Naive thymus-derived CD4-positive, alpha-beta T cell (primary cell): ENCODE measurements at regions of chr17 and their contacts with region 1.

Region 1: GRCh38 chr17:77372444-77373298 is 231.9 kb downstream of the SEC14L1 start:
- DNase-seq: peak; percentile 44 to 82 (median 63)
- ATAC-seq: peak; percentile 60
- H3K4me3 ChIP-seq: peak overlapping the region; percentile 98
- H3K4me3 Mint-ChIP-seq: peak overlapping the region; percentile 80 to 100 (median 85)
- H3K27ac ChIP-seq: peak overlapping the region; percentile 80
- H3K27ac Mint-ChIP-seq: peak overlapping the region in 8 of 9 donors; percentile 84 to 93 (median 90)
- H3K4me1 ChIP-seq: peaks cover 44 to 54% of the 10 kb centered on the region in 2 donors
- H3K4me1 Mint-ChIP-seq: peaks cover 49 to 74% (median 65%) of the 10 kb centered on the region in 7 donors
- H3K27me3 ChIP-seq: no peaks in the 10 kb centered on the region
- H3K27me3 Mint-ChIP-seq: no peaks in the 10 kb centered on the region

Region 2: DNA sequence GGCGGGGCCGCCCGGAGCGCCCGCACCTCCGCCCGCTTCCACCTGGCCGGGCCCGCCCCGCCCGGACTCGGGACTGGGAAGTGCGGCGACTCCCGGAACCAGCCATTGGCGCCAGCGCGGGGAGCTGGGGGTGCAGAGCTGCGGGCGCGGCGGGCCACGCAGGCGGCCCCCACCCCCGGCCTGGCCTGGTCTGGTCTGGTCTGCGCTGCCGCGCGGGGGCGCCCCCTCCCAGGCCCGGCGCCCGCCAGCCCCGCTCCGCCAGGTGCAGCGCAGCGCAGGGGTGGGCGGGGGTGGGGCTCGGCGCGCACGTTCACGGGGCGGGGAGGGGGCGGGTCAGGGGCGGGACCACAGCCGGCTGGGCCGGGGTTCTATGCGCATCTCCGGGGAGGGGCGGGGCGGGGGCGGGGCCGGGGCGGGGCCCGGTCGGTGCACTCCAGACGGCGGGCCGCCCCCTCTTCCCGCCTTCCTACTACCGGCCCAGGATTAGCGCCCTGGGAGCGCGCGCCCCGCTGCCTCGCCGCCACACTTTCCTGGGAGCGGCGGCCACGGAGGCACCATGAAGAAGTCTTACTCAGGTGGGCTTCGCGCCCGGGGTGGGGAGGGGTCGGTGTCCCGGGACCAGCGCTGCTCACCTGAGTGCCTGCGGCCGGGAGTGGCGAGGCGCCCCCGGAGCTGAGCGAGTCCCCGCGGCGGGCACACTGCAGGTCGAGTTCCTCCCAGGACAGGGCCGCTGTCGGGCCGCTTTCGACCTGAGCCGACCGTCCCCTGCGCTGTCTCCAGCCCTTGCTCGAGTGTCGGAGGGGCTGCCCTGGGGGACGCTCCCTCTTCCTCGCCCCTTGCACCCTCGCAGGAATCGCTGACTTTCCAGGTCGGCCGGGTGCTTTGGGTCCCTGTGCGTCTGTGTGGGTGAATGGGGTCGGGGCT is 91.4 kb before region 1 on chr17:
- CTCF ChIA-PET with region 1: no interaction called
- POLR2A ChIA-PET with region 1: no interaction called
- intact Hi-C with region 1: no loop called
- DNase-seq: peak; percentile 62 to 79 (median 72)
- ATAC-seq: peak; percentile 94
- H3K4me3 ChIP-seq: peak overlapping the region; percentile 54
- H3K4me3 Mint-ChIP-seq: peak overlapping the region; percentile 75 to 88 (median 78)
- H3K27ac ChIP-seq: no peak overlapping the region
- H3K27ac Mint-ChIP-seq: peak overlapping the region; percentile 67 to 95 (median 87)
- H3K4me1 ChIP-seq: peaks cover 3 to 10% of the 10 kb centered on the region in 2 donors
- H3K4me1 Mint-ChIP-seq: peaks cover 13 to 20% (median 17%) of the 10 kb centered on the region in 7 donors
- H3K27me3 ChIP-seq: no peaks in the 10 kb centered on the region
- H3K27me3 Mint-ChIP-seq: peaks cover 0 to 47% (median 11%) of the 10 kb centered on the region in 5 donors

Region 3: DNA sequence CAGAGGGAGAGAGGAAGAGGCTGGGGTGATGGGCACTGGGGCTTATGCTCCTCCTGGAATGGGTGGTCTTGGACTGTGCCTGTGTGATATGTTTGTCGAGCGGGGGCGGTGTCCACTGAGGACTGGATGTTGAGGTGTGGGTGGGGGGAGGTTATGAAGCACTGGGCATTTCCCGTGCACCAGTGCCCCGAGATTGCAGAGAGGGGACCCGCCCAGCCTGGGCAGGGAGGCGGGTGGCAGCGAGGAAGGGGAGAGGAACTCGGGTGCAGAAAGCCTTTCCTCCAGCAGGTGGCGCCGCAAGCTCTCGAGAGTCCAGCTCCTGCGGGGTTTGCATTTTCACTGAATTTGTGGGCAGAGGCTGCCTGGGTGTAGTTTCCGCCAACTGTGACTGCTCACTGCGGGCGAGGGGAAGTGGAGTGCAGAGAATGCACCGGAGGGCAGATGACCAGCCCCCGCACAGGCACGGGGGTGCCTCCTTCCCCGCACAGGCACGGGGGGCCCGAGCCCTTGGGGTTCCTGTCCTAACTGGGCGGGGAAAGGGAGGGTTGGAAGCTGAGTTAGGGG is 41.3 kb before region 1 on chr17:
- CTCF ChIA-PET with region 1: interaction called, 10 read pairs
- POLR2A ChIA-PET with region 1: interaction called, 84 read pairs
- intact Hi-C with region 1: loop called (anchors 1 kb)
- DNase-seq: peak; percentile 88 to 98 (median 93)
- ATAC-seq: peak; percentile 95
- H3K4me3 ChIP-seq: peak overlapping the region; percentile 10
- H3K4me3 Mint-ChIP-seq: peak overlapping the region; percentile 78 to 91 (median 84)
- H3K27ac ChIP-seq: peak overlapping the region; percentile 66
- H3K27ac Mint-ChIP-seq: peak overlapping the region; percentile 70 to 98 (median 91)
- H3K4me1 ChIP-seq: peaks cover 29% of the 10 kb centered on the region in 2 donors
- H3K4me1 Mint-ChIP-seq: peaks cover 37 to 55% (median 48%) of the 10 kb centered on the region in 7 donors
- H3K27me3 ChIP-seq: no peaks in the 10 kb centered on the region
- H3K27me3 Mint-ChIP-seq: no peaks in the 10 kb centered on the region

Region 4: GRCh38 chr17:77382966-77383612 is 10.4 kb after region 1 on chr17:
- CTCF ChIA-PET with region 1: interaction called, 10 read pairs
- POLR2A ChIA-PET with region 1: interaction called, 112 read pairs
- intact Hi-C with region 1: loop called in 1 of 2 experiments (anchors 1 kb)
- DNase-seq: no peak
- ATAC-seq: no peak
- H3K4me3 ChIP-seq: peak overlapping the region; percentile 17
- H3K4me3 Mint-ChIP-seq: peak overlapping the region; percentile 60 to 90 (median 86)
- H3K27ac ChIP-seq: peak overlapping the region; percentile 58
- H3K27ac Mint-ChIP-seq: peak overlapping the region; percentile 76 to 94 (median 93)
- H3K4me1 ChIP-seq: peaks cover 73 to 83% of the 10 kb centered on the region in 2 donors
- H3K4me1 Mint-ChIP-seq: peaks cover 59 to 94% (median 89%) of the 10 kb centered on the region in 7 donors
- H3K27me3 ChIP-seq: no peaks in the 10 kb centered on the region
- H3K27me3 Mint-ChIP-seq: no peaks in the 10 kb centered on the region

Region 5: DNA sequence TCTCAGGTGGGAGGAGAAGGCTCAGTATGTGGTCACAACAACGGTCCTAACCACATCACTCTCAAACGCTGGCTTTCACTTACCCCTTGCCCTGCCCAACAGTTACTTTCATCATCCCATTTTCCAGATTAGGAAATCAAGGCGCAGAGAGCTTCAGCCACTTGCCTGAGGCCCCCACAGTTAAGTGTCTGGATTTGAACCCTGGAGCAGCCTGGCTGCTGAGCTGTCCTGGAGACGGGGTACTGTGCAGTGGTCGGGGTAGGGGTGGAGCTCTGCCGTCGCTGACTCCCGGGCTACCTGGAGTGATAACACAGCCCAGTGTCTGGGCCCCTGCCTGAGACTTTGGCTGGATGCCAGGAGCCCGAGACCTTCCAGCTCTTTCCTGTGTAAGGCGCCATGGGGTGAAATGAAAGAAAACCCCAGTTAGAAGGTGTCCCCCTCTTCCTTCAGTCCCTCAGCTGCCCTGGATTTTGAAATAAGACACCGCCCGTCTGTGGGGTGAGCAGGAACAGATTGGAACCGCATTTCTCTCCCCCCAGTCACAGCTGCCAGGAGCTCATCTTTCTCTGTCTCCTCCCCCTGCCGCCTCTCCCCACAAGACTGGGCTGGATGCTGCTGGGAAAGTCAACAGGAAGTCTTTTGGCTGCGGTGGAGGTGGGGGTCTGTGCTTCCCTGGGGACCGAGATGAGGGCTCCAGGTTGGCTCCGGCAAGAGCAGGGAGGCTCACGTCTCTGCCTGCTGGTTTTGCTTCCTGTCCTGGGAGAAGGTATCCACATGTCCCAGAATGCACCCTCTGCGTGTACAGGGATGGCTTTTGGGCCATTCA is 48.3 kb after region 1 on chr17:
- CTCF ChIA-PET with region 1: interaction called, 3 read pairs
- POLR2A ChIA-PET with region 1: interaction called, 17 read pairs
- intact Hi-C with region 1: no loop called
- DNase-seq: peak in 7 of 9 donors; percentile 50 to 65 (median 58)
- ATAC-seq: peak; percentile 56
- H3K4me3 ChIP-seq: peak overlapping the region; percentile 53
- H3K4me3 Mint-ChIP-seq: peak overlapping the region; percentile 79 to 88 (median 85)
- H3K27ac ChIP-seq: peak overlapping the region; percentile 53
- H3K27ac Mint-ChIP-seq: peak overlapping the region; percentile 82 to 97 (median 94)
- H3K4me1 ChIP-seq: peaks cover 44 to 57% of the 10 kb centered on the region in 2 donors
- H3K4me1 Mint-ChIP-seq: peaks cover 22 to 73% (median 60%) of the 10 kb centered on the region in 7 donors
- H3K27me3 ChIP-seq: no peaks in the 10 kb centered on the region
- H3K27me3 Mint-ChIP-seq: no peaks in the 10 kb centered on the region

Region 6: DNA sequence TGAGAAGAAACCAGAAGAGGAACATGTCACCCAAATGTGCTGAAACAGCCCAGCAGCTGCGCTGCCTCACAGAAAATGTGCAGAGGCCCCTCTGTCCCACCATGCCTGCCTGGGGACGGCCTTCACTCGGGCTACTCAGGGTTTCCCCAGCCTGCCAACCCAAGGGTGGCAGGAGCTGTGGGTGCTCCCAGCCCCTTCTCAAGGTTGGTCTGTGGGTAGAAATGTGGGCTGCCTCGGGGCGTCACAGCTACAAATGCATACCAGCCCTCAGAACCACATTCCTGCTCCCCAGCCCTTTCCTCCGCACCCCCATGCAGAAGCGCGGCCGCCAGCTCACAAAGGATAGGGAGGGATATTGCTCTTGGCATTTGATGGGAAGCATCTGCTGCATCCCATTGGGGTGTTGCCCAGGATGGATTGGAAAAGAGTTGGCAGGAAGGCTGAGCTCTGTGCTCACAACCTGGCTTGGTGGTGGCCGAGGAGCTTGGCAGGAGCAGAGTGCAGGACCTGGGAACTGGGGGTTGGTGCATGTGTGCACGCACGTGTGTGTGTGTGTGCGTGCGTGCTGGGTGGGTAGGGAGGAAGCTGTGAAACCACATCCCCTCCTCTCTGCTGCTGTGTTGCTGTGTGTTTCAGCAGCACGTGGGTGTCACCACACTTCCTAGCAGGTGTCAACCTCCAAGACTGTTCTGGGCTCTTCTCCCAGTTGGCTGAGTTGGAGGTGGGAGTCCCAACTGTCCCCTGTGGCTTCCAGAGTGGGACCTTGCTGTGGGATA is 72.5 kb after region 1 on chr17:
- CTCF ChIA-PET with region 1: interaction called, 7 read pairs
- POLR2A ChIA-PET with region 1: interaction called, 64 read pairs
- intact Hi-C with region 1: loop called (anchors 1 to 5 kb)
- DNase-seq: peak; percentile 68 to 96 (median 94)
- ATAC-seq: peak; percentile 84
- H3K4me3 ChIP-seq: peak overlapping the region; percentile 57
- H3K4me3 Mint-ChIP-seq: peak overlapping the region; percentile 77 to 98 (median 86)
- H3K27ac ChIP-seq: peak overlapping the region; percentile 92
- H3K27ac Mint-ChIP-seq: peak overlapping the region; percentile 93 to 100 (median 99)
- H3K4me1 ChIP-seq: peaks cover 90 to 91% of the 10 kb centered on the region in 2 donors
- H3K4me1 Mint-ChIP-seq: peaks cover 73 to 99% (median 93%) of the 10 kb centered on the region in 7 donors
- H3K27me3 ChIP-seq: no peaks in the 10 kb centered on the region
- H3K27me3 Mint-ChIP-seq: no peaks in the 10 kb centered on the region

Region 7: DNA sequence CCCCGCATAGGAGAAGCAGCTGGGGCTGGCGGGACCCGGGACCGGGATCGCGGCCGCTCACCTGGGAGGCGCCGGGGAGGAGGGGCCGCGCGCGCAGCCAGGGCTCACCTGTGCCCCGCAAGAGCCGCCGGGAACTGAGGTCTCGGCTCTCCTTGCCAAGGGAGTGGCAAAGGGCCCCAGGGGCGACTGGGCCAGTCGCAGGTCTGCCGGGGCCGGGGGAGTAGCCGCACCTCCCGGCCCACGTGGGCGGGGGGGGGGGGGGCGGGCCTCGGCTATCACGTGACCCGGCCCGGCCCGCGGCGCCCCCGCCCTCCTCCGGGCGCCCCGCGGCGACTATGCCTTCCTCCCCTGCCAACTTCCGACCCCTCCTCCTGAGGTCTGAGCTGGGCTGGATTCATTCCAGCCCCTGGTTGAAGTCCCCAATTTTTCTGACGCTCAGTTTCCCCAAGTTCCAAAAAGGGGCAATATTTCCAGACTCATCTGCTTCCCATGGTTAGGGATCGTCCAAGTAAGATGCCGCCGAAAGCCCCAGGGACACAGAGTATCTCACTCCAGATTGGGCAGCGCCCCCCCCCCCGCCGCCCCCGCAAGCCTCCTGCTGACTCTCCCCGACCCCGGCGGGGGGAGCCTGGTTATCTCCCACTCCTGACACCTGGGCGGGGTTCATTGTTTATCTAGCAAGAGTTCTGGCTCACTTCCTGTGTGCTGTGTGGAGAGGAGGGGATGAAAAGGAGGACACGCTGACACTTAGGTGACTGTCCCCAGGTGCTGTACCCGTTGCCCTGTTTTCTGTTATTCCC is 756.1 kb after region 1 on chr17 and contains the start of gene TMC6:
- CTCF ChIA-PET with region 1: no interaction called
- POLR2A ChIA-PET with region 1: no interaction called
- intact Hi-C with region 1: loop called in 1 of 2 experiments (anchors 10 kb)
- DNase-seq: peak in 8 of 9 donors; percentile 76 to 88 (median 82)
- ATAC-seq: peak; percentile 45
- H3K4me3 ChIP-seq: peak within 1 kb of the TSS; percentile 95
- H3K4me3 Mint-ChIP-seq: peak within 1 kb of the TSS; percentile 89 to 100 (median 99)
- H3K27ac ChIP-seq: peak within 1 kb of the TSS; percentile 77
- H3K27ac Mint-ChIP-seq: peak within 1 kb of the TSS; percentile 95 to 99 (median 97)
- H3K4me1 ChIP-seq: peaks cover 56 to 59% of the 10 kb centered on the region in 2 donors
- H3K4me1 Mint-ChIP-seq: peaks cover 19 to 53% (median 39%) of the 10 kb centered on the region in 7 donors
- H3K27me3 ChIP-seq: no peaks in the 10 kb centered on the region
- H3K27me3 Mint-ChIP-seq: peaks cover 0 to 3% (median 0%) of the 10 kb centered on the region in 5 donors
- total RNA-seq, gene TMC6: 574 to 808 (median 773) TPM